PC-9 (cell line): ENCODE measurements at regions of chr22 and their contacts with region 1.

Region 1: GRCh38 chr22:39117585-39118191 is 20.6 kb downstream of the APOBEC3H start:
- DNase-seq: peak; percentile 50 to 58
- H3K4me3 ChIP-seq: no peak overlapping the region
- H3K27ac ChIP-seq: no peak overlapping the region
- H3K4me1 ChIP-seq: peaks cover 18% of the 10 kb centered on the region
- H3K27me3 ChIP-seq: no peaks in the 10 kb centered on the region
- CTCF ChIP-seq: peak; percentile 80

Region 2: GRCh38 chr22:38901111-38901641 is 216.5 kb before region 1 on chr22:
- CTCF ChIA-PET with region 1: interaction called, 13 read pairs
- POLR2A ChIA-PET with region 1: no interaction called
- intact Hi-C with region 1: no loop called
- DNase-seq: no peak
- H3K4me3 ChIP-seq: no peak overlapping the region
- H3K27ac ChIP-seq: no peak overlapping the region
- H3K4me1 ChIP-seq: no peaks in the 10 kb centered on the region
- H3K27me3 ChIP-seq: 0 out of 2 replicates have a peak, but pooled peaks cover 2% of the 10 kb centered on the region
- CTCF ChIP-seq: no peak

Region 3: GRCh38 chr22:39003165-39003638 is 114.5 kb before region 1 on chr22:
- CTCF ChIA-PET with region 1: interaction called, 19 read pairs
- POLR2A ChIA-PET with region 1: no interaction called
- intact Hi-C with region 1: no loop called
- DNase-seq: peak; percentile 89 to 94
- H3K4me3 ChIP-seq: no peak overlapping the region
- H3K27ac ChIP-seq: peak overlapping the region; percentile 20; the same call in 1 of the 2 replicates
- H3K4me1 ChIP-seq: peaks cover 11% of the 10 kb centered on the region
- H3K27me3 ChIP-seq: no peaks in the 10 kb centered on the region
- CTCF ChIP-seq: peak; percentile 95

Region 4: GRCh38 chr22:39013942-39014722 is 103.6 kb before region 1 on chr22 and contains the start of gene APOBEC3C:
- CTCF ChIA-PET with region 1: interaction called, 4 read pairs
- POLR2A ChIA-PET with region 1: no interaction called
- intact Hi-C with region 1: loop called (anchors 2 kb)
- DNase-seq: peak; percentile 89 to 92
- H3K4me3 ChIP-seq: peak within 1 kb of the TSS; percentile 77
- H3K27ac ChIP-seq: peak within 1 kb of the TSS; percentile 65
- H3K4me1 ChIP-seq: peaks cover 27% of the 10 kb centered on the region
- H3K27me3 ChIP-seq: no peaks in the 10 kb centered on the region
- CTCF ChIP-seq: peak; percentile 28; the same call in 1 of the 2 replicates
- total RNA-seq, gene APOBEC3C: 64.6 and 66.5 TPM in 2 replicates

Region 5: GRCh38 chr22:39039306-39040126 is 78.2 kb before region 1 on chr22:
- CTCF ChIA-PET with region 1: interaction called, 10 read pairs
- POLR2A ChIA-PET with region 1: no interaction called
- intact Hi-C with region 1: no loop called
- DNase-seq: no peak
- H3K4me3 ChIP-seq: peak overlapping the region; percentile 62; the same call in 1 of the 2 replicates
- H3K27ac ChIP-seq: no peak overlapping the region
- H3K4me1 ChIP-seq: peaks cover 27% of the 10 kb centered on the region
- H3K27me3 ChIP-seq: no peaks in the 10 kb centered on the region
- CTCF ChIP-seq: no peak